ENCODE measurements at regions of chr18 and their contacts with region 1.

Region 1: GRCh38 chr18:32289483-32290075 is 99.7 kb downstream of the MEP1B start:
- DNase-seq: peak; percentile 45
- ATAC-seq: no peak
- H3K4me3 Mint-ChIP-seq: no peak overlapping the region
- H3K27ac Mint-ChIP-seq: no peak overlapping the region
- H3K4me1 Mint-ChIP-seq: no peaks in the 10 kb centered on the region
- H3K27me3 Mint-ChIP-seq: no peaks in the 10 kb centered on the region

Region 2: DNA sequence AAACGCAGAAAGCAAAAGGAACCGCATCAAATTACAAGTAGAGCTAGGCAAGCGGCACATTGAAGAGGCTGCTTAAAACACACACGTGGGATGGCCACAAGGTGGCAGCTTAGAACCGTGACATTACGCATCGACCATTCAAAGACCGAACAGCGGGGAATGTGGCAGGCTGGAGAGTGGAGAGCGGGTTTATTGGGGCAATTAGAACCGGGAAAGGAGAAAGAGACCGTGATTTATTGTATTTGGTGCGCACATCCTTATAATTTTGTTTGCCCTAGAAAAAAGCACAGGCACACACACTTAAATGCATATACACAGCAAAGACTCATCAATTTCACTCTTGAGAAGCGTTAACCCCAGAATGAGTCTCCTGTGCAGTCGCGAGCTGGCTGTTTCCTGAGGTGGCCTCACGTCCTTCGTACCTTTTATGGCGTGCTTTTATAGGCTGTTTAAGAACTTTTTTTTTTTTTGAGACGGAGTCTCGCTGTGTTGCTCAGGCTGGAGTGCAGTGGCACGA is 131.4 kb before region 1 on chr18:
- CTCF ChIA-PET with region 1: interaction called, 11 read pairs
- DNase-seq: peak; percentile 81
- ATAC-seq: peak; percentile 94
- H3K4me3 Mint-ChIP-seq: peak overlapping the region; percentile 46
- H3K27ac Mint-ChIP-seq: no peak overlapping the region
- H3K4me1 Mint-ChIP-seq: peaks cover 8% of the 10 kb centered on the region
- H3K27me3 Mint-ChIP-seq: peaks cover 24% of the 10 kb centered on the region

Region 3: GRCh38 chr18:32175265-32175664 is 114.3 kb before region 1 on chr18:
- CTCF ChIA-PET with region 1: no interaction called
- DNase-seq: no peak
- ATAC-seq: no peak
- H3K4me3 Mint-ChIP-seq: no peak overlapping the region
- H3K27ac Mint-ChIP-seq: no peak overlapping the region
- H3K4me1 Mint-ChIP-seq: no peaks in the 10 kb centered on the region
- H3K27me3 Mint-ChIP-seq: peaks cover 4% of the 10 kb centered on the region

Measured in activated CD8-positive, alpha-beta memory T cell treated with anti-CD3 and anti-CD28 coated beads, Interleukin-2, amount 10 ng/mL, durations not matched to agents 7 days and 5 days (primary cell).